Activated naive CD4-positive, alpha-beta T cell treated with anti-CD3 and anti-CD28 coated beads, Interleukin-2, amount 10 ng/mL, durations not matched to agents 7 days and 5 days (primary cell): ENCODE measurements at regions of chr1 and their contacts with region 1.

Region 1: DNA sequence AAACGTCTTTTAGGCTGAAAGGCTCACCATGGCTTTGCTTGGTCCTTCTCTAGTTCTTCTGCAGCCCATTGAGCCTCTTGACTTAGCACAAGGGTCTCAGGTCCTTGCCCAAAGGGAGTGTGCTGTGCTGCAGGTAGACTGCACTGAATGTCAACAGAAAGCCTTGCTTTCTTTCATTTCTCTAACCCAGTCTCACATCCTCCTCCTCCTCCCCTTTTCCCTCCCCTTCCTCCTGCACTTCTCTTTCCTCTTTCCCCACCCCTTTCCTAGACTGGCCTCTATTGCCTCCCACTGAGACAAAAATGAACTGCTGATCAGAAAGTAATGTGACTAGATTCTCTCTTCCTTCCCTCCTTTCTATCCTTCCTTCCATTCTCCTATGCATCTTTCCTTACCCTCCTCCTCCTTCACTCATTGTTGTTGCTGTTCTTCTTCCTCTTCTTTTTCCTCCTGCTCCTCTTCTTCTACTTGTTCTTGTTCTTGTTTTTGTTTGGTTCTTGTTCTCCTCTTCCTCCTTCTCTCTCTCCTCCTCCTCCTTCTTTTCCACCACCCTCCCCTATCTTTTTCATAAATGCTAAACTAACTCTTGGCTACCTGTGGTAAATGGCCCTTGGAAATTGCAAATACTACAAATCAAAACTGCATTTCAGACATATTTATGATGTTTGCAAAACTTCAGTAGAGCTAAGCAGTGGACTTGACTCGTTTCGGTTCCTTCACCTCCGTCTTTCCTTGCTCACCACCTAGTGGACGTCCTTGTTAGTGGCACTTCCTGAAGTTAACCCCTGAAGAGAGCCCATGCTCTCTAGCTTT is at the start of gene SELL:
- DNase-seq: peak; percentile 86
- H3K4me3 Mint-ChIP-seq: peak within 1 kb of the TSS; percentile 88
- H3K27ac Mint-ChIP-seq: peak within 1 kb of the TSS; percentile 91
- H3K4me1 Mint-ChIP-seq: peaks cover 20% of the 10 kb centered on the region
- H3K27me3 Mint-ChIP-seq: peaks cover 11% of the 10 kb centered on the region

Region 2: GRCh38 chr1:169595764-169596711 is 115.6 kb before region 1 on chr1:
- CTCF ChIA-PET with region 1: interaction called, 146 read pairs
- DNase-seq: peak; percentile 58
- H3K4me3 Mint-ChIP-seq: no peak overlapping the region
- H3K27ac Mint-ChIP-seq: no peak overlapping the region
- H3K4me1 Mint-ChIP-seq: peaks cover 32% of the 10 kb centered on the region
- H3K27me3 Mint-ChIP-seq: peaks cover 4% of the 10 kb centered on the region

Region 3: DNA sequence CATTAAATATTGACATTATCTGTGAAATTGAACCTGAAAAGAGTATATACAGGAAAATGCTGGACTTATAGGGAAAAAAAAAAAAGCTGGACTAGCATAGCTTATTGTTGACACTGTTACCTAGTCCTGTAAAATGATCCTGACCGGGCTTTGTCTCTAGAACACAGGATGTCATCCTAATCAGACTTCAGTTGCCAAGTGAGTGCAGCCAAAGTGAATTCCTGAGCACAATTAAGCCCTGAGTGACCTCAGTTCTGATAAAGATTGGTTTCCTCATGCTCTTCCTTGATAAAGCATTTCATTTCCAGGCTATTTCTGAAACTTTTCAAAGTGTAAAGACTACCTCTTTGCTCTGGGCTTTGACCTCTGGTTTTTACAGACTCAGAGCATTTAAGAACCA is 101.6 kb before region 1 on chr1:
- CTCF ChIA-PET with region 1: interaction called, 146 read pairs
- DNase-seq: no peak
- H3K4me3 Mint-ChIP-seq: no peak overlapping the region
- H3K27ac Mint-ChIP-seq: no peak overlapping the region
- H3K4me1 Mint-ChIP-seq: peaks cover 26% of the 10 kb centered on the region
- H3K27me3 Mint-ChIP-seq: no peaks in the 10 kb centered on the region

Region 4: DNA sequence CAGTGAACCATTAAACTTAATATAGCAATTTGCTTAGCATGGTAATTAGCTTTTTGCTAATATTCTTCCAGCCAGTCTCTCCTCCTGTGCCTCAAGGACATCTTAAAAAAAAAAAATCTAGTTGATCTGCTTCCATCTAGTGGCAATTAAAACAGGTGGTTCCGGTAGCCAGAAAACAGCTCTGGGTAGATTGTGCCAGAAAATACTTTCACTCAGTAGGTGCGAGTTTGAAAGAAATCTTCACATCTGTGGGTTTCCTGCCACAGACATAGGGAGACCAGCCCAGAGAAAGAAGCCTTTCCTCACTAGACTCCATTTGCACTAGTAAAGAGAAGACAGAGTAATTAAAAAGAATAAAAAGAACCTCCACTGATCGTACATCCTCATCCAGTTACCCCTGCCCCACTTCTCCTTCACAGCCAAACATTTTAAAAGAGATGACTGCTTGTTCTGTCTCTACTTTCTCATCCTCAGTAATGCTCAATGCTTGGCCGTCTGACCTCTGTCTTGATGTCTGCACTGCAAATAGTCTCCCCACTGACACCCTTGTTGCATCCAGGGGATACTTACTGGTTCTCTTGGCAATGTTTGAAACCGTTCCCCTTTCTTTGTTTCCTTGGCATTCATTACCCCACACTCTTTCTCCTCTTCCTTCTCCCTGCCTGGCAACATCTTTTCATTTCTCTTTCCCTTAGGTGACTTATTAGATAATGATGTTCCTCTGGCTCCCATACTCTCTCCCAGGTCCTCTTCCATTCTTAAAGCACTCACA is 17.2 kb before region 1 on chr1:
- CTCF ChIA-PET with region 1: interaction called, 62 read pairs
- DNase-seq: peak; percentile 66
- H3K4me3 Mint-ChIP-seq: peak overlapping the region; percentile 39
- H3K27ac Mint-ChIP-seq: peak overlapping the region; percentile 95
- H3K4me1 Mint-ChIP-seq: peaks cover 98% of the 10 kb centered on the region
- H3K27me3 Mint-ChIP-seq: no peaks in the 10 kb centered on the region

Region 5: GRCh38 chr1:169741666-169742394 is 30.2 kb after region 1 on chr1:
- CTCF ChIA-PET with region 1: no interaction called
- DNase-seq: no peak
- H3K4me3 Mint-ChIP-seq: no peak overlapping the region
- H3K27ac Mint-ChIP-seq: no peak overlapping the region
- H3K4me1 Mint-ChIP-seq: no peaks in the 10 kb centered on the region
- H3K27me3 Mint-ChIP-seq: peaks cover 46% of the 10 kb centered on the region